ENCODE measurements at regions of chr2 and their contacts with region 1.

Region 1: GRCh38 chr2:47724221-47724981 is 58.5 kb upstream of the MSH6 start:
- DNase-seq: peak; percentile 62
- ATAC-seq: peak; percentile 85
- H3K4me3 Mint-ChIP-seq: peak overlapping the region; percentile 61
- H3K27ac Mint-ChIP-seq: peak overlapping the region; percentile 97
- H3K4me1 Mint-ChIP-seq: peaks cover 78% of the 10 kb centered on the region
- H3K27me3 Mint-ChIP-seq: no peaks in the 10 kb centered on the region
- CTCF ChIP-seq: no peak

Region 2: DNA sequence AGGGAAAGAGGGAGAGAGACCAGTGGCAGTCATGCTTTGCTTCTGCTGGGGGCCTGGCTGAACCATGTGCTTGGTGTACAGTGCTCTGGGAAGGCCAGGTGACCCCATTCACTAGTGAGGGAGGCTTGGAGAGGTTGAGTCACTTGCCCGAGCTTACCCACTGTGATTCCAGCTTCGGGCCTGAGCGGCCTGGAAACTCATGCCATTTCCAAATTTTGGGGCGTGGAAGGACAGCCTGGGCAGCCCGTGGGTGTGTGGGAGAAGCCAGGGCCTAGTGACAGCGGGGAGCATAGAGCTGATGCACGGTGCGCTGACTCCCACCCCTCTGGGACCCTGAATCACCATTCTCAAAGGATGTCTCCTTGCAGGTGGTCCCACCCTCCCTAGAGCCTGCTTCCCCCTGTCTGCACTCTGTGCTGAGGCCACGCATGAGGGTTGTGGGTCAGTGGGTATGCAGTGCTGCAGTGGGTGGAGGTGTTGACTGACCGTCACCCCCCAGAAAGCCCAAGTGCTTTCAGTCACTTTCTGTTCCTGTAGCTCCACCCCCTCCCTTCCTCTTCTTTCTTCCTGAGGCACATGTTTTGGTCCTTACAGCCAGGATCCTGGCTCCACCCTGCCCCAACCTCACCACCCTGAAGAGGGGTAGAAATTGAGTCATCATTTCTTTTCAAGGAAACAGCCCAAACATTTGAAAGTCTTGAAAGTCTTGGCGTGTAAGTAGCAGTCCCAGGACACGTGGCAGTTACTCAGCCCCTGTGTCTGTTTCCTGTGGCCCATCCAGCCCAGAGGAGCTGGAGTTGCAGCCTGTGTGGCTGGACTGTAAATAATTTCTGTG is 739.5 kb before region 1 on chr2:
- CTCF ChIA-PET with region 1: no interaction called
- POLR2A ChIA-PET with region 1: interaction called, 5 read pairs
- intact Hi-C with region 1: loop called (anchors 2 kb)
- DNase-seq: no peak
- ATAC-seq: peak; percentile 25
- H3K4me3 Mint-ChIP-seq: peak overlapping the region; percentile 76
- H3K27ac Mint-ChIP-seq: peak overlapping the region; percentile 98
- H3K4me1 Mint-ChIP-seq: peaks cover 87% of the 10 kb centered on the region
- H3K27me3 Mint-ChIP-seq: no peaks in the 10 kb centered on the region
- CTCF ChIP-seq: no peak

Region 3: GRCh38 chr2:47653902-47654789 is 70.3 kb before region 1 on chr2:
- CTCF ChIA-PET with region 1: interaction called, 3 read pairs
- POLR2A ChIA-PET with region 1: interaction called, 5 read pairs
- intact Hi-C with region 1: loop called (anchors 1 kb)
- DNase-seq: no peak
- ATAC-seq: no peak
- H3K4me3 Mint-ChIP-seq: peak overlapping the region; percentile 51
- H3K27ac Mint-ChIP-seq: peak overlapping the region; percentile 90
- H3K4me1 Mint-ChIP-seq: peaks cover 51% of the 10 kb centered on the region
- H3K27me3 Mint-ChIP-seq: no peaks in the 10 kb centered on the region
- CTCF ChIP-seq: no peak

Region 4: GRCh38 chr2:47697000-47697601 is 27.3 kb before region 1 on chr2:
- CTCF ChIA-PET with region 1: no interaction called
- POLR2A ChIA-PET with region 1: interaction called, 26 read pairs
- intact Hi-C with region 1: loop called (anchors 1 kb)
- DNase-seq: no peak
- ATAC-seq: peak; percentile 51
- H3K4me3 Mint-ChIP-seq: peak overlapping the region; percentile 67
- H3K27ac Mint-ChIP-seq: peak overlapping the region; percentile 87
- H3K4me1 Mint-ChIP-seq: peaks cover 67% of the 10 kb centered on the region
- H3K27me3 Mint-ChIP-seq: peaks cover 2% of the 10 kb centered on the region
- CTCF ChIP-seq: no peak

Region 5: DNA sequence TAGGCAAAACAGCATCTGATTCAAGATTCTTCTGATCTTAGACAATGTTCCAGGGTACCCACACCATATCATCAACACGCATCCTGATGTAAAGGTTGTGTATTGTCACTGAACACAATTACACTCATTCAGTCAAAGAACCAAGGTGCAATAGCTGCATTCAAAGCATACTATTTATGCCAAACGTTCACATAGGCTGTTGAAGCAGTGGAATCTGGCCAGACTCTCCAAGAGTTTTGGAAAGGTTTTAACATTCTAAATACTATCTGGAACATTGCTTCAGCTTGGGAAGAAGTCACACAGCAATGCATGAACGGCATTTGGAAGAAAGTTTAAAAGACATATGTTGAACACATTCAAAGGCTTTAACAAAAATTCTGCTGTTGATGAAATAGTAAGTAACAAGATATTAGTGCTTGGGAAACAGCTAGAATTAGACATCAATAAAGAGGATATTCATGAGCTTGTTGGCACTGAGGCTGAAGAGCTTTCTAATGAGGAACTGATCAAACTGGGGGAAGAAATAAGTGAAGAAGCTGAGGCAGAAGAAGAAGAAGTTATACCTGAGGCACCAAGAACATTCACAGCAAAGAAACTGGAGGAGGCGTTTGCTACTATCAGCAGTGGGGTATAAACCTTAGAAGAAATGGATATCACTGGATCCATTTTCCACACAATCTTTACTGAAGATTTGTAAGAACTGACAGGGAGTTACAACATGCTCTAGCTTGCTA is 10.9 kb after region 1 on chr2:
- CTCF ChIA-PET with region 1: interaction called, 3 read pairs
- POLR2A ChIA-PET with region 1: interaction called, 6 read pairs
- intact Hi-C with region 1: loop called (anchors 1 kb)
- DNase-seq: no peak
- ATAC-seq: peak; percentile 58
- H3K4me3 Mint-ChIP-seq: no peak overlapping the region
- H3K27ac Mint-ChIP-seq: peak overlapping the region; percentile 25
- H3K4me1 Mint-ChIP-seq: peaks cover 29% of the 10 kb centered on the region
- H3K27me3 Mint-ChIP-seq: no peaks in the 10 kb centered on the region
- CTCF ChIP-seq: no peak

Region 6: GRCh38 chr2:47767880-47768609 is 43.6 kb after region 1 on chr2:
- CTCF ChIA-PET with region 1: interaction called, 8 read pairs
- POLR2A ChIA-PET with region 1: interaction called, 5 read pairs
- intact Hi-C with region 1: loop called (anchors 1 kb)
- DNase-seq: peak; percentile 82
- ATAC-seq: peak; percentile 95
- H3K4me3 Mint-ChIP-seq: peak overlapping the region; percentile 55
- H3K27ac Mint-ChIP-seq: peak overlapping the region; percentile 57
- H3K4me1 Mint-ChIP-seq: peaks cover 6% of the 10 kb centered on the region
- H3K27me3 Mint-ChIP-seq: no peaks in the 10 kb centered on the region
- CTCF ChIP-seq: peak; percentile 97

Region 7: DNA sequence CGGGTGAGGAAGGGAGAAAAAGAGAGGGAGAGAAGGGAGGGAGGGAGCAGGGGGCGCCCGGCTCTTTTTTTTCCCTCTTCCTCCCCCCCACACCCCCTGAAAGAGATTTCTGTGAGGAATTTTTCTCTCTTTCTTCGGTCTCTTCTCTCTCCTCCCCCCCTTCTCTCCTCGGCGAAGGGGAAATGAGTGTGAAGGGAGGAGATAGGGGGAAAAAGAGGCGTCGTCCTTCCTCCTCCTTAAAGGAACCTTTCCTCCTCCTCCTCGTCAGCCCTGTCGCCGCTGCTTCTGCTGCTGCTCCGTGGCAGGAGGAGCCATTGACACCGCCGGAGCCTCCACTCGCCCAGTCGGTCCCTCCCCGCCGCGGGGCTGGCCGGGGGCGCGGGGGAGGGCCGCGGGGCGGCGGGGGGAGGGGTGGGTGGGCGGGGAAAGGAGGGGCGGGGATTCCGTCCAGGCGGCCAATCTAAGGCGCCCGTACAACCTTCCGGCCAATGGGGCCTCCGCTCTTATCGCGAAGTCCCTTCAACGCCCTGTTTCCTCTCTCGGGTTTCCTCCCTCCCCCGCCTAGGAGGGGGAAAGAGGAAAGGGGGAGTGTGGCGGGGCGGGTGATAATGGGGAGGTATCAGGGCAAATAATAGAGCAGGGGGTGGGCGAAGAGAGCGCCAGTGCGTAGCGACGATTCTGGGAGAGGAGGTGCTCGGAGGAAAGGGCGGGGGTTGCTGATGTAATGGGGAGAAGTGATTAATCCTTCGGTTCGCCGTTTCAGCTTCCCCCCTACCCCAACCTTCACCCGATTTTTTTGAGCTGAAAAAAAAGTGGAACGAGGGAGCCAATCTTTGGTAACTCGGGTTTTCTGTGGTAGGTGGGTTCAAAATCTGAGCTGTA is 182.0 kb after region 1 on chr2 and contains the start of gene FBXO11:
- CTCF ChIA-PET with region 1: no interaction called
- POLR2A ChIA-PET with region 1: no interaction called
- intact Hi-C with region 1: loop called (anchors 2 kb)
- DNase-seq: peak; percentile 85
- ATAC-seq: peak; percentile 85
- H3K4me3 Mint-ChIP-seq: peak within 1 kb of the TSS; percentile 93
- H3K27ac Mint-ChIP-seq: peak within 1 kb of the TSS; percentile 99
- H3K4me1 Mint-ChIP-seq: peaks cover 42% of the 10 kb centered on the region
- H3K27me3 Mint-ChIP-seq: no peaks in the 10 kb centered on the region
- CTCF ChIP-seq: no peak
- total RNA-seq, gene FBXO11: 77.8 and 89.1 TPM in 2 replicates

Measured in activated B cell treated with CpG ODN at 0.5 μM for 24 hours (primary cell).